GM18951 (cell line): ENCODE measurements at regions of chr13 and their contacts with region 1.

Region 1: DNA sequence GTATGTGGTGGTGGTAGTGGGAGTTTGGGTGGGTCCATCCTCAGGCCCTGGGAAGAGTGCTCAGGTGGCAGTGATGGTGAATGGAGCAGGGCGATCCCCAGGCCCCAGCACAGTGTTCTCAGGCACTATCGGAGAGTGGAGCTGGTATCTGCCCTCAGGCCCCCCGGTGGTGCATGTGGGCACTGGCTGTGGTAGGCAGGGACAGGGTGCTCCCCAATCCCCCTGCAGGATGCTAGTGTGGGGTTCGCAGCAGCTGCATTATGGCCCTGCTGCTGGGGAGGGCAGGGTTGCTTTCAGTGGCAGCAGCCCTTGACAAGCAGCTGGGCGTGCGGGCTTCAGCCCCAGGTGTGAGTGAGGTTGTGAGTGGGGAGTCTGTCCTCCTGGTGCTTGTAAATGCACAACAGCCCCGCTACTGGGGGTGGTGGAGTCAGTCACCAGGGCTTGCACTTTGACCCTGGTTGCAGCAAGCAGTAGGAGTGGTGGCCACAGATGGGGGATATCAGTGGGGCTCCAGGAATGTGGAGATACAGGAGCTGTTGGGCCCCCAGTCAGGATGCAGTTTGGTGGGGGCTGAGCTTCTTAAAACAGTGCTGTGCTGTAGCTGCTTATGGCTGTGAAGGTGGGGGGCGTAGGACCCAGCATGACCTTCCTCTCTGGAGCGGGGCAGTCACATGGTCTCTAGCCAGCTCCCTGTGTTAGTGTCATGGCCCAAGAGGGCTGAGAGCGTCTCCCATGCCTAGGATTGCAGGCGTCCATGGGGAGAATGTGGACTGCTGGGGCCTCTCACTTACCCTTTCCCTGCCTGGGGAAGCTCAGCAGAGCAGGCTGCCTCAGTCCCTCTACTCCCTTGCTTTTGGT is 38.7 kb upstream of the ARHGEF7 start:
- POLR2A ChIP-seq: no peak

Region 2: DNA sequence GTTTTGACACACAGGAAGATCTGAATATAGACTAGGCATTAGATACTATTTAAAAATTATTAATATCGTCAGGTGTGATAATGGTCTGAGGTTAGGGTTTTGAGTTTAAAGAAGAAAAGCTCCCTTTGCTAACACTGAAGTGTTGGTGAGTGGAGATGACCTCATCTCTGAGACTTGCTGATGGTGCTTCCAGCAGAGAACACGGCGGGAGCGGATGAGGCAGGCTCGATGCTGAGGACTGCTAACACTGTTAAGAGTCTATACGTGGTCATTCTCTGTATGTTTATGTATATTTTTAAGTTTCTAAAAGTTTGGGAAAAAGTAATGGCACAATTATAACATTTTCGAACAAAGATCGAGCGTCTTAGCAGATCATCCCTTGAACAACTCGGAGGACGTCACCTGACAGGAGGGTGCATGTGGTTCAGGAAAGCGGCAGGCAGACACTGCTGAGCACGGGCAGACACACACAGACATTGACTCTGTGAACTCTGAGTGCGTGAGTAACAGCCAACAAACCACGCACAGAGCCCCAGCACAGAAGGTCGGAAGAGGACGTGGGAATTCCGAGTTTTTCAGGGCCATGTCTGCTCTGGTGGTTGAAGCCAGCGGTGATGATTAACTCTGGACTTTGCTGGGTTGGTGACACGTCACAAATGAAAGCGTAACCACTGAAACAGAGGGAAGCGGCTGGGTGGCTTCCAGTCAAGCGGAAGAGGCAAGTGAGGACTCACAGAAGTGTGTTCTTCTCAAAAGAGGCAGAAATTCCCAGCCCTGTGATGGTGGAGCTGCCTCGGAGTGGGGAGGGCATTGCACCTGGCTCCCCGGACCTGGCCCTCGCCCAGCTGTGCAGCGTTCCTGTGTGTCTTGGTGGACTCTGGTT is 152.1 kb after region 1 on chr13:
- in situ Hi-C with region 1: loop called (anchors 10 kb)
- POLR2A ChIP-seq: no peak

Region 3: DNA sequence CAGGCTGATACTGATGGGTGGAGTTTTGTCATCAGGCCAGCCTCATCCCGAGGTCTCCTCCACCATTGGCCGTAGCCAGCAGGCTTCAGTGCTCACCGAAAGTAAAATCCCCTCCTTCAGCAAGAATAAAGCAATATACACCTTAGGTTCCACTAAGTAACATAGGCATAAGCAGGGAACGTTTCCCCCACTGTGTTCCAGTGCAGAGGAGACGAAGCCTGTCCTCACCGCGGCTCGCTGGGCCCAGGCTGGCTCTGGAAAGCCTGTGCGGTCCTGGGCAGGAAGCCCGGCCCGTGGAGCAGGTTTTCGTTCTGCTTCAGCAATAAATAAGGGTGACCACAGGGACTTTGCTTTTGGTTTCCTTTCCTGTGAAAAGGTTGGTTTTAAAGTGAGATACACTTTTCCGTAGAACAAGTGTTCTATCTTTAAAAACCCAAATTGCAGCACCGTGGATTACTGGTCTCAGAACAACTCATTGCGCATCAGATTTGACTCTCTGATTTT is 227.7 kb after region 1 on chr13:
- in situ Hi-C with region 1: no loop called
- POLR2A ChIP-seq: no peak